ENCODE measurements at regions of chr12 and their contacts with region 1.

Region 1: DNA sequence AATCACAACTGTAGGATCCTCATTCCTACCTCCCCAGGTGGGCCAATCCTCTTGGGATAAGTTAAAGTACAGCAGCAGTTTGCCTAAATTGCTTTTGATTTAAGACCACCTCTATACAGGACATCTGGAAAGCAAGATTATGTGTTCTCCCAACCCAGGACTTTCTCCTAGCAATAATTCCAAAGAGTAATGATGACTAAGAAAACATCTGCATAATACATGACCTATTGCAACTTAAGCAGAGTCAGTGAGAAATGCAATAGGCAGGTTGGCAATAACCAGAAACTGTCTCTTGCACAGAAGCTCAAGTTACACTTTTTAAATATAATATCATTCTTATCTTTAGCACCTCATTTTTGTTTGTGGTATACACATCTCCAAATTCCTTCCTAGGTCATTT is 275.4 kb downstream of the TRHDE start:
- DNase-seq: no peak
- H3K4me3 ChIP-seq: no peak overlapping the region
- H3K27ac ChIP-seq: no peak overlapping the region
- H3K4me1 ChIP-seq: no peaks in the 10 kb centered on the region
- CTCF ChIP-seq: no peak

Region 2: DNA sequence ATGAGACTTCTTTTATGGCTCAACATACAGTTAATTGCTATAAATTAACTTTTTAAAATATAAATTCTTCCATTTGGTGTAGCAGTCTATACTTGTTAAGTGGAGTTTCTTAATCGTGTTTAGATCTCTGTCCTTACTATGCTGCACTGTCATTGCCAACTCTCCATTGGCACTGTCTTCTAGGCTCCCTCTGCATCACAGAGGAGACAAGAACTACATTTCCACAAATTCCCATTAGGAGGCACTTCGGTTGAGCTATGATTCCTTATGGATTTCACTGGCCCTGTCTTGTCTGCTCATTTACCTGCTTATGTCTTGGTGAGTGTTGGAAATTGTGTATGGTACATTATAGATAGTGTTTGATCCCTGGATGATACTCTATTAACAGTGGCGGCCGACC is 1359.2 kb after region 1 on chr12:
- CTCF ChIA-PET with region 1: no interaction called
- POLR2A ChIA-PET with region 1: no interaction called
- intact Hi-C with region 1: loop called (anchors 5 kb)
- DNase-seq: no peak
- H3K4me3 ChIP-seq: no peak overlapping the region
- H3K27ac ChIP-seq: no peak overlapping the region
- H3K4me1 ChIP-seq: no peaks in the 10 kb centered on the region
- CTCF ChIP-seq: no peak

Measured in OCI-LY7 (cell line).